ENCODE measurements at regions of chr10 and their contacts with region 1.

Region 1: GRCh38 chr10:3395458-3395861 is 222.9 kb upstream of the PITRM1 start:
- DNase-seq: peak; percentile 82
- H3K4me3 ChIP-seq: no peak overlapping the region
- H3K27ac ChIP-seq: peak overlapping the region in 1 of 2 experiments; percentile 95; a peak in 2 of 4 replicates
- H3K4me1 ChIP-seq: peaks cover 6 to 63% of the 10 kb centered on the region in 2 experiments; a peak in 3 of 4 replicates
- H3K27me3 ChIP-seq: no peaks in the 10 kb centered on the region
- CTCF ChIP-seq: no peak
- EP300 ChIP-seq: peak in 1 of 2 experiments; percentile 94; a peak in 2 of 4 replicates
- RAD21 ChIP-seq: peak; percentile 43

Region 2: GRCh38 chr10:3239066-3239919 is 156.2 kb before region 1 on chr10:
- CTCF ChIA-PET with region 1: interaction called, 10 read pairs
- POLR2A ChIA-PET with region 1: interaction called, 4 read pairs
- DNase-seq: peak; percentile 81
- H3K4me3 ChIP-seq: no peak overlapping the region; a peak in 1 of 4 replicates
- H3K27ac ChIP-seq: no peak overlapping the region
- H3K4me1 ChIP-seq: no peaks in the 10 kb centered on the region; a peak in 1 of 4 replicates
- H3K27me3 ChIP-seq: no peaks in the 10 kb centered on the region
- CTCF ChIP-seq: peak; percentile 81
- EP300 ChIP-seq: no peak
- RAD21 ChIP-seq: peak; percentile 96

Region 3: GRCh38 chr10:3527869-3528268 is 132.4 kb after region 1 on chr10:
- CTCF ChIA-PET with region 1: no interaction called
- POLR2A ChIA-PET with region 1: no interaction called
- DNase-seq: peak; percentile 49
- H3K4me3 ChIP-seq: no peak overlapping the region
- H3K27ac ChIP-seq: peak overlapping the region in 1 of 2 experiments; percentile 99; a peak in 2 of 4 replicates
- H3K4me1 ChIP-seq: peaks cover 3 to 29% of the 10 kb centered on the region in 2 experiments
- H3K27me3 ChIP-seq: no peaks in the 10 kb centered on the region
- CTCF ChIP-seq: no peak
- EP300 ChIP-seq: no peak
- RAD21 ChIP-seq: no peak

Region 4: GRCh38 chr10:3785257-3785850 is 389.9 kb after region 1 on chr10:
- CTCF ChIA-PET with region 1: no interaction called
- POLR2A ChIA-PET with region 1: interaction called, 24 read pairs
- DNase-seq: peak; percentile 100
- H3K4me3 ChIP-seq: peak overlapping the region; percentile 62 to 97
- H3K27ac ChIP-seq: peak overlapping the region; percentile 93 to 96
- H3K4me1 ChIP-seq: peaks cover 14 to 31% of the 10 kb centered on the region in 2 experiments; a peak in 3 of 4 replicates
- H3K27me3 ChIP-seq: no peaks in the 10 kb centered on the region
- CTCF ChIP-seq: no peak
- EP300 ChIP-seq: peak in 1 of 2 experiments; percentile 2; a peak in 1 of 4 replicates
- RAD21 ChIP-seq: no peak; the same call in 1 of the 2 replicates

Measured in SK-N-SH (cell line).